ENCODE measurements at regions of chr20 and their contacts with region 1.

Region 1: GRCh38 chr20:50395258-50395729 is 114.9 kb upstream of the PTPN1 start:
- DNase-seq: peak; percentile 93

Region 2: DNA sequence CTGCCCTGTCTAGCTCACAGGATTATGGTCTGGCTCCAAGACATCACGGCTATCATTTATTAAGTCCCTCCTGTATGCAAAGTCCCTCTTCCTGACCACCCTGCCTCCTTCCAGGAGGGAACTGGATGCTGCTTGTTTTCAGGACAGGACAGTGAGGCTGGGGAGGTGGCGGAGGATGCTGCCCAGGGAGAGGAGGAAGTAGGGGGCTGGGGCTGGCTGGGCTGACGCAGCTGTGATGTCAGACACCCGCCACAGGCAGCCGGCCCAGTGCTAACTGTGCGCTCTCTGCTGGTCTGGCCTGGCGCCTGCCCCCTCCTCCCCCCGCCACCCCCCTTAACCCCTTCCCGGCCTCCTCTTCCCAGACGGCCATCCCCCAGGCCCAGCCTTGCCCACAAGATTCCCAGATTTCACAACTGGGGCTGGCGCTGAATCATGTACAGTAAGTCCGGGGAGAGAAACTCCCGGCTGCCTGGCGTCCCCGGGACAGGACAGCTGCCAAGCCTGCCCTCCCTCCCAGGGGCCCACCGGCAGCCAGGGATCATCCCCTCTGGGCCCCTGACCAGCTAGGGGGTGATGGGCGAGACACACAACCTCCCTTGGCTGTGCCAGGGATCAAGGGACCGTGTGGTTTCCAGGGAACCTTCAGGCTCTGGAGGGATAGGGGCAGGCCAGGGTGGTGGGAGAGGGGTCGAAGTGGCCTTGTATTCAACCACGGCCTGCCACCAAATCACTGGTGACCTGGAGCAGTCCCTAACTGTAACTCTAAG is 86.6 kb before region 1 on chr20:
- intact Hi-C with region 1: loop called in 1 of 2 experiments (anchors 5 kb)
- DNase-seq: peak; percentile 98

Region 3: DNA sequence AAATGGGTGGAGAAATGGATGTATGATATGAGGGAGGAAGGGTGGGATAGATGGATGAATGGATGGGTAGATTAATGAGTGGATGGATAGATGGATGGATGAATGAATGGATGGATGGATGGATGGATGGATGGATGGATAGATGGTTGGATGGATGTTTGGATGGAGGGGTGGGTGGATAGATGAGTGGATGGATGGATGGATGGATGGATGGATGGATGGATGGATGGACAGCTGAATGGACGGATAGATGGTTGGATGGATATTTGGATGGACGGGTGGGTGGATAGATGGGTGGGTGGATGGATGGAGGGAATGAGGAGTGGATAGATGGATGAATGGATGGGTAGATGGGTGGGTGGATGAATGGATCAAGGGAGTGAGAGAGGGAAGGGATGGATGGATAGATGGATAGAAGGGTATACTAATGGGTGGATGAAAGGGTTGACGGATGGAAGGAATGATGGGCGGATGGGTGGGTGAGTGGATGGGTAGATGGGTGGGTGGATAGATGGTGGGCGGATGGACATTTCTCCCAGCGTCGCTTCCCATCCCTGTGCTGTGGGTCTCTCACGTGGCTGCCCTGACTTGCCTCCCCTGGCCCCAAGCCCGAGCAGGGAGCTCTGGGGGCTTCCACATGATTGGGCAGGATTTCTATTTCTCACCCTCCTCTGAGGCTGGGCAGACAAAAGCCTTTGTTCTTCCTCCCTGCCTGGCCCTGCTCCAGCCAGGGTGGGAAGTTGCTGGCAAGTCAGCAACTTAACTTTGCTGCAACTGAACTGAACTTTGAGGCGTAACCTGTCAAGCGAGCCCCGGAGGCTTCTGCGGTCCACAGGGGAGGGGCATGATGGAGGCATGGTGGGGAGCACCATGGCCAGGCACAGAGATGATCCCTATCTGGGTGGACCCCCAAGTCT is 65.0 kb before region 1 on chr20:
- intact Hi-C with region 1: no loop called
- DNase-seq: no peak

Region 4: GRCh38 chr20:50460460-50461267 is 65.4 kb after region 1 on chr20:
- intact Hi-C with region 1: loop called in 1 of 2 experiments (anchors 10 kb)
- DNase-seq: peak; percentile 97

Measured in posterior vena cava (tissue), 2 donors.